ENCODE measurements at regions of chr22 and their contacts with region 1.

Region 1: GRCh38 chr22:46006379-46007002 is 29.5 kb upstream of the WNT7B start:
- DNase-seq: peak; percentile 94 to 98 (median 96)
- ATAC-seq: peak; percentile 53 to 75 (median 68)
- H3K4me3 ChIP-seq: peak overlapping the region in 10 of 12 donors; percentile 9 to 52 (median 29)
- H3K27ac ChIP-seq: peak overlapping the region; percentile 74 to 100 (median 94)
- H3K4me1 ChIP-seq: peaks cover 5 to 64% (median 49%) of the 10 kb centered on the region in 12 donors
- H3K27me3 ChIP-seq: no peaks in the 10 kb centered on the region
- CTCF ChIP-seq: peak; percentile 94 to 99 (median 98)
- POLR2A ChIP-seq: no peak

Region 2: DNA sequence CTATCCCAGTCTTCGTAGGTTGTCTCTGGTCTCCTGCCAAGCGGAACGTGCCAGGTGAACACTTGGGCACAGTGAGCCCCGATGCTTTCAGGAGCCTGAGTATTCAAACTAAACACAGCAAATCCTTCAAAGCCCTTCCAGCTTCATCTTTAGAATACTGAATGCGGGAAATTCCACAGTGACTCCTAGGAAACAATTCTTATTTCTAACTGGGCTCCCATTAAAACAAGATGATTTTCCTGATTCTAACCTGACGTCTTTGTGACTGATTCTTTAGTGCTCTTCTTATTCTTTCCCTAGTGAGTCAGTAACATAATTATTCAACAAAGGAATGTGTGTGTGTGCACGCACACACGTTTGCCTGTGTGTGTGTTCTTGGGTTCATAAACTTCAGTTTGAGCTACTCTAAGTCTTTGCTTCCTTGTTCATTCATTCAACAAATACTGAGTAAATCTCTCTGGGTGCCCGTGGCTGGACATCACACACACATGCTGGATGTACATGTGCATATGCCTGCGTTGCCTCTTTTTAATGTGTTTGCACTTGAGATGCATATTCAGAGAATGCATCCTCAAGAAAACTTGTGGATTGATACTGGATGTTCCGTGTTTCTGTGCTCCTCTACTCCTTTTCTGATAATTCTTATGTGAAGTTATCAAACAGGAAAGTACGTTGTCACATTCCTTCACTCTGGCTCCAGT is 164.1 kb before region 1 on chr22:
- intact Hi-C with region 1: no loop called
- DNase-seq: no peak
- ATAC-seq: no peak
- H3K4me3 ChIP-seq: no peak overlapping the region
- H3K27ac ChIP-seq: no peak overlapping the region
- H3K4me1 ChIP-seq: peaks cover 0 to 14% (median 0%) of the 10 kb centered on the region in 12 donors
- H3K27me3 ChIP-seq: no peaks in the 10 kb centered on the region
- CTCF ChIP-seq: no peak
- POLR2A ChIP-seq: no peak

Region 3: GRCh38 chr22:45942787-45943493 is 63.6 kb before region 1 on chr22:
- intact Hi-C with region 1: no loop called
- DNase-seq: no peak
- ATAC-seq: no peak
- H3K4me3 ChIP-seq: no peak overlapping the region
- H3K27ac ChIP-seq: no peak overlapping the region
- H3K4me1 ChIP-seq: no peaks in the 10 kb centered on the region
- H3K27me3 ChIP-seq: no peaks in the 10 kb centered on the region
- CTCF ChIP-seq: no peak
- POLR2A ChIP-seq: no peak

Region 4: DNA sequence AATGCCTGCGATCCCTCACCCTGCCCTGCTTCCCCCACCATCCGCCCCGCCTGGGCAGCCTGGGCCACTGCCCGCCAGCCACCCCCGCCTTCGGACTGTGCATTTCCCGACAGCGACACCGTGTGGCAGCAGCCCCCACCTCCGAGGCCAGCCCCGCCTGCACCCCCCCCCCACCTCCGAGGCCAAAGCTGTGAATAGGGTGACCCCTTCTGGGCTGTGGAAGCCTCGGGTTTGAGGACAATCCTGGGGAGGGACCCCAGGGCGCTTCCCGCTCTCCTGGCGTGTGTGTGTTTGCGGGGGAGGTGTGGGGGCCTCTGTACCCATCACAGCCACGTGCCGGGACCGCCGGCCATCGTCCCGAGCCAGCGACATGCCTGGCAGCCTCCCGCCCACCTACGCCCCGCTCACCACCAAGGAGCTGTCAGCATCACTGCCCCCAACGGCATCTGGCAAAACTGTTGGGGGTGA is 110.0 kb after region 1 on chr22:
- intact Hi-C with region 1: loop called in 9 of 10 experiments (anchors 1 to 2 kb)
- DNase-seq: peak; percentile 94 to 97 (median 95)
- ATAC-seq: peak; percentile 73 to 83 (median 75)
- H3K4me3 ChIP-seq: no peak overlapping the region
- H3K27ac ChIP-seq: peak overlapping the region in 11 of 12 donors; percentile 49 to 86 (median 81)
- H3K4me1 ChIP-seq: peaks cover 19 to 68% (median 47%) of the 10 kb centered on the region in 12 donors
- H3K27me3 ChIP-seq: no peaks in the 10 kb centered on the region
- CTCF ChIP-seq: peak; percentile 57 to 99 (median 76)
- POLR2A ChIP-seq: no peak

Region 5: GRCh38 chr22:46309526-46310085 is 303.1 kb after region 1 on chr22:
- intact Hi-C with region 1: loop called in 1 of 10 experiments (anchors 5 kb)
- DNase-seq: peak in 3 of 5 donors; percentile 44 to 63 (median 54)
- ATAC-seq: peak; percentile 59 to 90 (median 72)
- H3K4me3 ChIP-seq: no peak overlapping the region
- H3K27ac ChIP-seq: peak overlapping the region in 2 of 12 donors; percentile 41 to 42
- H3K4me1 ChIP-seq: peaks cover 0 to 13% (median 0%) of the 10 kb centered on the region in 12 donors
- H3K27me3 ChIP-seq: no peaks in the 10 kb centered on the region
- CTCF ChIP-seq: no peak
- POLR2A ChIP-seq: no peak